Right lobe of liver (tissue), 6 donors: ENCODE measurements at regions of chr14 and their contacts with region 1.

Region 1: GRCh38 chr14:97994020-97994531 is 1196.9 kb downstream of the VRK1 start:
- DNase-seq: no peak
- ATAC-seq: no peak
- H3K4me3 ChIP-seq: no peak overlapping the region
- H3K27ac ChIP-seq: no peak overlapping the region
- H3K4me1 ChIP-seq: no peaks in the 10 kb centered on the region
- H3K27me3 ChIP-seq: no peaks in the 10 kb centered on the region
- CTCF ChIP-seq: no peak
- POLR2A ChIP-seq: no peak

Region 2: DNA sequence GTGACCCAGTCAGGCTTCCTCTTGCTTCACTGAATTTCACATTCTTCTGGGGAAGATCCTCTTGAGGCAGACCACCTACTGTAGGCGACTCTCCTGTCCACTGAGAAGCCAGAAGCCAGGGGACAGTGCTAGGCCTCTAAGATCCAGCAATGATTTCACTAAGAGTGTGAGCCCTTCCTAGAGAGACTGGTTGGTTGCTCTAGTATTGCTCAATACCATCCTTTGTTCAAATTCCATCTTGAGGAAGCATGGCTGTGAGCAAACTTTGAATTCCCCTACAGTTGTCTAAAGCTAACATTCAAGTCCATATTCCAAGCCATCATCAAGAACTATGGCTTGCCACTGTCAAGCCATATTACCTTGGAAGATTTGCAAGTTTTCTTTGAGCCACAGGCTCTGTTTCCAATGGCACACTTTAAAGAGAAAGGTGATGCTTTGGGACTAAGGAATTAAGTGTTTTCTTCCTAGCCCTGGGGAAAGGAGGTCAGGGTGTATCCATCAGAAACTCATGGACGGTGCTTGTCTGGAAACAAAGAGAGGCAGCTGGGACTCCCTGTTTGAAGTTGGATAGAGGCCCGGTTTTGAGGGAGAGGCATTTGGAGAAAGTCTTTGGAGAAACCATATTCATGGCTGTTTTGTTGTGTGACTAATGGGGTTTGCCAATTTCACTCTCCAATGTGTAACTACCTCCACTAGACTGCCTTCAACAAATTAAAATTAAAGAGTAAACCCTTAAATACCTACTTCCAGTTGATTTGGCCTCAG is 21.0 kb after region 1 on chr14:
- intact Hi-C with region 1: loop called in 1 of 2 experiments (anchors 2 kb)
- DNase-seq: no peak
- ATAC-seq: no peak
- H3K4me3 ChIP-seq: no peak overlapping the region
- H3K27ac ChIP-seq: no peak overlapping the region
- H3K4me1 ChIP-seq: no peaks in the 10 kb centered on the region
- H3K27me3 ChIP-seq: no peaks in the 10 kb centered on the region
- CTCF ChIP-seq: no peak
- POLR2A ChIP-seq: no peak

Region 3: GRCh38 chr14:98198385-98198784 is 204.3 kb after region 1 on chr14:
- intact Hi-C with region 1: no loop called
- DNase-seq: no peak
- ATAC-seq: peak in 2 of 4 donors; percentile 38 to 41
- H3K4me3 ChIP-seq: no peak overlapping the region
- H3K27ac ChIP-seq: no peak overlapping the region
- H3K4me1 ChIP-seq: no peaks in the 10 kb centered on the region
- H3K27me3 ChIP-seq: no peaks in the 10 kb centered on the region
- CTCF ChIP-seq: no peak
- POLR2A ChIP-seq: no peak